A549 (cell line): ENCODE measurements at regions of chr10 and their contacts with region 1.

Region 1: GRCh38 chr10:101272229-101272868 is 43.1 kb upstream of the LBX1 start:
- DNase-seq: peak; percentile 68 to 95
- ATAC-seq: peak; percentile 88 to 97
- H3K4me3 ChIP-seq: no peak overlapping the region
- H3K27ac ChIP-seq: 0 out of 6 replicates have a peak overlapping the region, but pooled peaks of 1 of the 2 experiments have one; percentile 37
- H3K4me1 ChIP-seq: peaks cover 5% of the 10 kb centered on the region; the same call in 1 of the 3 replicates
- CTCF ChIP-seq: peak; percentile 65
- EP300 ChIP-seq: no peak
- POLR2A ChIP-seq: no peak
- RAD21 ChIP-seq: peak; percentile 50 to 55; a peak in 4 of 5 replicates

Region 2: DNA sequence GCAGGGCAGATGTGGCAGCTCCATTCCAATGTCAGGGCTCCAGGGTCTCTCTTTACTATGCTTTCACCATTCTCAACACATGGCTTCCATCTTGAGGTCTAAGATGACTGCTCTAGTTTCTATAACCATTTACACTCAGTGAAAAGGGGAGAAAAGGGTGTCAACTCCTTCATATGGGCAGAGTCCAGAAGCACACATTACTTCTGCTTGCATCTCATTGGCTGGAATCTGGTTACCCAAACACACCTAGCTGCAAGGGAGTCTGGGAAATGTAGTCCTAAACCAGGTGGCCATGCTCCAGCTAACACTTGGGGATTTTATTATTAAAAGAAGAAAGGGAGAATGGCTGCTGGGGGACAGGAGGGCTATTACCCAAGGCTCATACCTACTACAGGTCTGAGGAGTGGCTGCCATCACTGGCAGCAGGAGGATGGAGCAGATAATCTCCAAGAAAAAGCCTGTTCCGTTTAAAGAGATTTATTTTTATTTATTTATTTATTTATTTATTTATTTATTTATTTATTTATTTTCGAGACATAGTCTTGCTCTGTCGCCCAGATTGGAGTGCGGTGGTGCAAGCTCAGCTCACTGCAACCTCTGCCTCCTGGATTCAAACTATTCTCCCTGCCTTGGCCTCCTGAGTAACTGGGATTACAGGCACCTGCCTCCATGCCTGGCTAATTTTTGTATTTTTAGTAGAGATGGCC is 14.0 kb before region 1 on chr10:
- CTCF ChIA-PET with region 1: interaction called, 66 read pairs
- POLR2A ChIA-PET with region 1: no interaction called
- DNase-seq: peak in 1 of 2 experiments; percentile 27
- ATAC-seq: no peak
- H3K4me3 ChIP-seq: no peak overlapping the region
- H3K27ac ChIP-seq: no peak overlapping the region
- H3K4me1 ChIP-seq: no peaks in the 10 kb centered on the region
- CTCF ChIP-seq: no peak
- EP300 ChIP-seq: no peak
- POLR2A ChIP-seq: no peak
- RAD21 ChIP-seq: no peak

Region 3: DNA sequence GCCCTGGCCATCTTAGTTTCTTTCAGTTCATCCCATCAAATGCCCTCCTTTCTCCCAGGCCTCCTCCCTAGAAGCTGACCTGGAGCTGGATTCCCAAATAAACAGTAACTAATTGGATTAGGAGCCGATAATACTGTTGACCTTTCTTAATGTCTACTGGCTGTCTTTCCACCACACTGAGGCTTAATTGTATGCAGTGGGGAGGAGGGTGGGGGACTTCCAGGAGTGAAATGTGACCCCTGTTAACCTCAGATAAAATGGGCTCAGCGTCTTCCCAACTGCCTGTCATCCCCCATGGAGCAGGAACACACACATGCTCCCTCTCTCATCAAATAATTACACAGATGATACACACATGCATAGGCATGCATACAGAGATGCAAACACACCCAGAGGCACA is 10.6 kb after region 1 on chr10:
- CTCF ChIA-PET with region 1: interaction called, 122 read pairs
- POLR2A ChIA-PET with region 1: no interaction called
- DNase-seq: no peak
- ATAC-seq: no peak
- H3K4me3 ChIP-seq: no peak overlapping the region
- H3K27ac ChIP-seq: no peak overlapping the region
- H3K4me1 ChIP-seq: peaks cover 2% of the 10 kb centered on the region; the same call in 1 of the 3 replicates
- CTCF ChIP-seq: no peak
- EP300 ChIP-seq: no peak
- POLR2A ChIP-seq: no peak
- RAD21 ChIP-seq: no peak